GM12878 (cell line): ENCODE measurements at regions of chr5 and their contacts with region 1.

Region 1: DNA sequence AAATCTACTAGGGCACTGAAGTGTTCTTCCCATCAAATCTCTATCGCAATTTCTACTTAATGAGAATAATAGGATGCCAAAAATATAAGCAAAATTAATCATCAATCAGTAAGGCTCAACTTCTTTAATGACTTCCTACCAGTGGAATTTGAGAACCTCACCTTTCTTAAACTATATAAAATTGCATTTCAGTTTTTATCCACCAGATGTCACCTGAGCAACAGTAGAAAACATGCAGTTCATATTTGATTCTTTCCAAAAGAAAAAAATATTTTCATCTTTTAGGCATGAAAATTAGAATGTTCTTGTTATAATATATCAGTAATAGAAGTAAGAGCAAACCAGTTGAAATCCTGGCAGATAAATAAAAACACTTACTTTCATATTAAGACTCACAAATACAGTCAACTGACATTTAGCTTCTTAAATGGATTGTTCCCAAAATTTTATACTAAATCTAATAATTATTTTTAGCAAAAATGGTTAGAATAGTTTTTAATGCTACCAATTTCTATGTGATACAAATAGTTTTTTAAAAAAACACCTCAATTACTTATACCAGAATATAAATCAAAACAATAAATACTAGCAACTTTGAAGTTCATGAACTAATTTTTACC is 13.4 kb upstream of the CCDC112 start:
- DNase-seq: no peak
- ATAC-seq: peak; percentile 75
- H3K4me3 ChIP-seq: no peak overlapping the region
- H3K27ac ChIP-seq: no peak overlapping the region
- H3K4me1 ChIP-seq: no peaks in the 10 kb centered on the region
- H3K27me3 ChIP-seq: no peaks in the 10 kb centered on the region
- CTCF ChIP-seq: peak; percentile 25 to 50 (median 47); a peak in 4 of 6 replicates
- EP300 ChIP-seq: no peak
- POLR2A ChIP-seq: no peak
- RAD21 ChIP-seq: peak; percentile 77

Region 2: DNA sequence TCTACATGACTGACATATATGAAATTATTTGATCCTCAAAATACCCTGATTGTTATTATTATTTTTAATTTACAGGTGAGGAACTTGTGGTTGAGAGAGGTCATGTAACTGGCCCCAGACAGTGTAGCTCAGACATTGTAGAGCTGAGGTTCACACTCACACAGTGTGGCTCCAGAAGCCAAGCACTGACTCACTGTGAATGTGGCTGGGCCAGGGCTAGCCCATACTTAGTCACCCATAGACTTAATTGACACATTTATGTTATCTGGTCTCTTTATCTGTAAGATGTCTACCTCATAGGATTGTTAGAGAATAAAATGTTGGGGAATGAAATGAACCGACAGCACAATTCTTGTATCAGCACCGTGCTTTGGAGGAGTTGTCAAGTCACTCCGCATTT is 11.4 kb after region 1 on chr5:
- CTCF ChIA-PET with region 1: interaction called, 45 read pairs
- POLR2A ChIA-PET with region 1: no interaction called
- RAD21 ChIA-PET with region 1: interaction called, 5 read pairs
- SMC1A ChIA-PET with region 1: interaction called, 18 read pairs
- in situ Hi-C with region 1: no loop called
- intact Hi-C with region 1: no loop called
- DNase-seq: no peak
- ATAC-seq: no peak
- H3K4me3 ChIP-seq: no peak overlapping the region
- H3K27ac ChIP-seq: no peak overlapping the region
- H3K4me1 ChIP-seq: no peaks in the 10 kb centered on the region
- H3K27me3 ChIP-seq: no peaks in the 10 kb centered on the region
- CTCF ChIP-seq: no peak
- EP300 ChIP-seq: no peak
- POLR2A ChIP-seq: no peak
- RAD21 ChIP-seq: no peak

Region 3: DNA sequence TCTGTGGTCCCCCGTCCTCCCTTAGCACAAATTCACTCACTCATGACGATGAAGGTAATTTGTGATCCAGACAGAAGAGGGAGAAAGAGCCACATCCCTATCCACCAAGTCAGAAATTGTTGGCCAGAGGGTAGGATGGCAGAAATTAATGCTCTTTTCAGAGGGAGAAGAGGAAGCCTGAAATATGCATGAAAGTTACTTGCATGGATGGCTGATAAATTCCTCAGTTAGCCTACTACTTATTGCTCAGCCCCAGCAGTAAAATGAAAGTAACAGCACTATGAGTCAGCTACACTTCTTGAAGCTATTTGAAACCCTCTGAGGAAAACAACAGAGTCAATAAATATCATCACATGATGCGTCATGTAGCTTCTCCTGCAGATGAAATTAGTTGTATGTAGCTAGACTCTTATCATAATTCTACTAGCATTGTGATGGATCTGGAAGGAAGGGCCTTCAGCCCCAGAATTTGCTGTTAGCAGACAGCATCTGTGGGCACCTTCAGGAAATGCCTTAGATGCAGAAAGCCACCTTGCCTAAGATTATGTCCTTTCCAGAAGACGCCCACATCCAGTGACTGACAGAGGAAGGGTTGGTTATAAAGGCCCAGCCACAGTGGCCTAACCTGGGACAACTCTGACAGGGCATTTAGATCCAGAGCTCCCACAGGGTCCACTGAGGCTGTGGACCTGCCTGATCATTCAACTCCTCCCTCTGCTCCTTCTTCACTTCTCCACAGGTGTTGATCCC is 67.8 kb after region 1 on chr5:
- CTCF ChIA-PET with region 1: interaction called, 26 read pairs
- POLR2A ChIA-PET with region 1: no interaction called
- RAD21 ChIA-PET with region 1: interaction called, 11 read pairs
- SMC1A ChIA-PET with region 1: interaction called, 39 read pairs
- in situ Hi-C with region 1: no loop called
- intact Hi-C with region 1: no loop called
- DNase-seq: peak; percentile 4
- ATAC-seq: peak; percentile 54
- H3K4me3 ChIP-seq: no peak overlapping the region
- H3K27ac ChIP-seq: no peak overlapping the region
- H3K4me1 ChIP-seq: peaks cover 9% of the 10 kb centered on the region
- H3K27me3 ChIP-seq: no peaks in the 10 kb centered on the region
- CTCF ChIP-seq: no peak
- EP300 ChIP-seq: no peak
- POLR2A ChIP-seq: no peak
- RAD21 ChIP-seq: peak; percentile 40

Region 4: GRCh38 chr5:115579747-115580173 is 269.9 kb after region 1 on chr5:
- CTCF ChIA-PET with region 1: interaction called, 81 read pairs
- POLR2A ChIA-PET with region 1: interaction called, 8 read pairs
- RAD21 ChIA-PET with region 1: interaction called, 59 read pairs
- SMC1A ChIA-PET with region 1: interaction called, 156 read pairs
- in situ Hi-C with region 1: no loop called
- intact Hi-C with region 1: loop called (anchors 1 kb)
- DNase-seq: peak; percentile 77
- ATAC-seq: peak; percentile 81
- H3K4me3 ChIP-seq: no peak overlapping the region
- H3K27ac ChIP-seq: peak overlapping the region; percentile 85
- H3K4me1 ChIP-seq: peaks cover 44% of the 10 kb centered on the region
- H3K27me3 ChIP-seq: no peaks in the 10 kb centered on the region
- CTCF ChIP-seq: no peak
- EP300 ChIP-seq: peak; percentile 60 to 63; a peak in 2 of 4 replicates
- POLR2A ChIP-seq: no peak
- RAD21 ChIP-seq: no peak

Region 5: DNA sequence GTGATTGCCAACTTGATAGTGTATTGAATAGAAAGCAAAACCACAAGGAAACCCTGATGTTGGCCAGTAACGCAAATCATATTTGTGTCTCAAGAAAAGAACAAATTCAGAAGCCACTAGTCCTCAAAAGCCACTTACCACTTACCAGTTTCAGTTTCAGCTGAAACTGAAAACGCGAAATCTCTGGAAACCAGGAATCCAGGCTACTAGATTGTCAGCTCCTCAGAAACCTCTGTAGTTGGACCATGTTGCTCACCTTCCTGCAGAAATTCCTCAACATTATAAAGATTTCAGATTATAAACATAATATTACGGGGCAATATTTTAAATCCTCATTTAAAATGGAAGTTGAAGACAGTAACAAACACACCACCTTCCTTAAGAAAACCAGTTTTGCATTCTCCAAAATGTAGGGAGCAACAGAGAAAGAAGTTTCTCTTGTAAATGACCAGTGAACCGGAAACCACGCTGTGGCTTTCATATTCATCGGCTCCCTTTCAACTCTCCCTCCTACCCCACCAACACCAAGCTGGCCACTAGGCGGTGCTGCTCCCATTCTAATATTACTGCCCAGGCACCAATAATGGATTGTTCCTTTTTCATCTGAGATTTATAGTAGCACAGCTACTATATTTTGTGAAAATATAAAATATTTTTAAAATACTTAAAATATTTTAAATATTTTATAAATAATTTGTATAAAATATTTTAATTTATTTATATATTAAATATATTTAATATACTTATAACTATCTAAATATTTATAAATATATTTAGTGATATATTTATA is 324.7 kb after region 1 on chr5:
- CTCF ChIA-PET with region 1: interaction called, 13 read pairs
- POLR2A ChIA-PET with region 1: no interaction called
- RAD21 ChIA-PET with region 1: interaction called, 4 read pairs
- SMC1A ChIA-PET with region 1: interaction called, 5 read pairs
- in situ Hi-C with region 1: no loop called
- intact Hi-C with region 1: no loop called
- DNase-seq: peak; percentile 73
- ATAC-seq: peak; percentile 86
- H3K4me3 ChIP-seq: peak overlapping the region; percentile 58
- H3K27ac ChIP-seq: no peak overlapping the region
- H3K4me1 ChIP-seq: peaks cover 18% of the 10 kb centered on the region
- H3K27me3 ChIP-seq: peaks cover 2 to 13% of the 10 kb centered on the region in 2 experiments; a peak in 2 of 4 replicates
- CTCF ChIP-seq: peak; percentile 94 to 99 (median 96); a peak in 5 of 6 replicates
- EP300 ChIP-seq: peak; percentile 7 to 25; a peak in 1 of 4 replicates
- POLR2A ChIP-seq: no peak
- RAD21 ChIP-seq: peak; percentile 99

Region 6: GRCh38 chr5:116068028-116068632 is 758.3 kb after region 1 on chr5:
- CTCF ChIA-PET with region 1: interaction called, 3 read pairs
- POLR2A ChIA-PET with region 1: no interaction called
- RAD21 ChIA-PET with region 1: interaction called, 3 read pairs
- SMC1A ChIA-PET with region 1: interaction called, 3 read pairs
- in situ Hi-C with region 1: loop called (anchors 10 kb)
- intact Hi-C with region 1: loop called (anchors 5 kb)
- DNase-seq: no peak
- ATAC-seq: peak; percentile 74
- H3K4me3 ChIP-seq: no peak overlapping the region
- H3K27ac ChIP-seq: no peak overlapping the region
- H3K4me1 ChIP-seq: no peaks in the 10 kb centered on the region
- H3K27me3 ChIP-seq: peaks cover 2 to 3% of the 10 kb centered on the region in 2 experiments; a peak in 3 of 4 replicates
- CTCF ChIP-seq: peak; percentile 42 to 68 (median 67); a peak in 5 of 6 replicates
- EP300 ChIP-seq: no peak
- POLR2A ChIP-seq: no peak
- RAD21 ChIP-seq: peak; percentile 84